ENCODE measurements at regions of chr3 and their contacts with region 1.

Region 1: GRCh38 chr3:179653096-179653797 is 407 bp downstream of the USP13 start:
- DNase-seq: peak; percentile 84
- ATAC-seq: peak; percentile 82

Region 2: DNA sequence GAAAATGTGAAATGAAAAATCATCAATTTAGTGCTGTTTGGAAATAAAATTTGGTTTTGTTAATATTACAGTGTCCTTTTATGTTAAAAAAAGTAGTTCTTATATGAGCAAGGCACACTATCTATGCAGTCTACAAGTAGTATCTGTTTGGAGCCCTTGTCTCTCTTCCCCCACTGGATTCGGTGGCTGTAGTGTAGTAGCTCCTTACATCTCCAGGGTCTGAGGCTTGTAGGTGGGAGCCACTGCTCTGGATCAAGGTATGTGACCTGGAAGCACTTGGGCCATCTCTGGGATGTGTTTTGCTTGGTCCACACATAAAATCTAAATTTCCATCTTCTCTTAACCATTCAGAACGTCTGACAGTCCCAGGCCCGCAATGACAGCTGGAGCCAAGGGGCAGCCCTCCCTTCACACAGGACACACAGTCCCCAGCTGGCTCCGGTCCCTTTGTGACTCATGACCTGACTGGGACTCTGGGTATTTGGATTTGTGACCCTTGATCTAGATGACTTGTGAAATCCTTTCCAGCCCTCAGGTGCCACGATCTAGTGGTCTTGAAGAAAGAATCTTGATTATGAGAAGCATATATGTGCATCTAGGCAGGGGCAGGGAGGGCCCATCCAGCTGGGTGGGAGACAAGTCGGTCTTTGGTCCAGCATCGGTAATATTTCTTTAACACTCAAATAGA is 79.6 kb after region 1 on chr3:
- intact Hi-C with region 1: loop called (anchors 10 kb)
- DNase-seq: peak; percentile 83
- ATAC-seq: peak; percentile 92

Measured in left ventricle myocardium superior (tissue), 1 donor.